ENCODE measurements at regions of chr7 and their contacts with region 1.

Region 1: GRCh38 chr7:100889761-100890634 is 483 bp upstream of the UFSP1 start:
- DNase-seq: peak; percentile 91 to 99 (median 96)
- ATAC-seq: peak; percentile 93
- H3K4me3 ChIP-seq: peak overlapping the region; percentile 67 to 90
- H3K27ac ChIP-seq: peak overlapping the region; percentile 88 to 92
- H3K4me1 ChIP-seq: peaks cover 28 to 52% of the 10 kb centered on the region in 2 donors
- H3K27me3 ChIP-seq: peaks cover 3 to 50% of the 10 kb centered on the region in 2 donors
- CTCF ChIP-seq: no peak

Region 2: DNA sequence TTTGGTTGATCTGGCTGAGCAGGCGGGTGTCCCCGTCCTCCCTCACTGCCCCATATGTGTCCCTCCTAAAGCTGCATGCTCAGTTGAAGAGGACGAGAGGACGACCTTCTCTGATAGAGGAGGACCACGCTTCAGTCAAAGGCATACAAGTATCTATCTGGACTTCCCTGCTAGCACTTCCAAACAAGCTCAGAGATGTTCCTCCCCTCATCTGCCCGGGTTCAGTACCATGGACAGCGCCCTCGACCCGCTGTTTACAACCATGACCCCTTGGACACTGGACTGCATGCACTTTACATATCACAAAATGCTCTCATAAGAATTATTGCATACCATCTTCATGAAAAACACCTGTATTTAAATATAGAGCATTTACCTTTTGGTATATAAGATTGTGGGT is 168.4 kb after region 1 on chr7:
- intact Hi-C with region 1: loop called (anchors 5 to 10 kb)
- DNase-seq: peak; percentile 45 to 80 (median 60)
- ATAC-seq: peak; percentile 79
- H3K4me3 ChIP-seq: no peak overlapping the region
- H3K27ac ChIP-seq: no peak overlapping the region
- H3K4me1 ChIP-seq: no peaks in the 10 kb centered on the region
- H3K27me3 ChIP-seq: peaks cover 0 to 79% of the 10 kb centered on the region in 2 donors
- CTCF ChIP-seq: no peak

Region 3: GRCh38 chr7:101066141-101066832 is 176.3 kb after region 1 on chr7:
- intact Hi-C with region 1: loop called in 1 of 2 experiments (anchors 10 kb)
- DNase-seq: no peak
- ATAC-seq: no peak
- H3K4me3 ChIP-seq: no peak overlapping the region
- H3K27ac ChIP-seq: no peak overlapping the region
- H3K4me1 ChIP-seq: no peaks in the 10 kb centered on the region
- H3K27me3 ChIP-seq: peaks cover 0 to 53% of the 10 kb centered on the region in 2 donors
- CTCF ChIP-seq: no peak